Activated T-helper 1 cell treated with anti-CD3 and anti-CD28 coated beads, Interleukin-12 subunit alpha, Interleukin-12 subunit beta, Interleukin-2, Interleukin-4 antibody, amounts not matched to agents 30 ng/mL and 10 ng/mL and 1 ng/mL, durations not matched to agents 14 hours and 24 hours and 36 hours (primary cell): ENCODE measurements at regions of chr5 and their contacts with region 1.

Region 1: GRCh38 chr5:10452768-10453331 is 11.2 kb downstream of the ROPN1L start:
- DNase-seq: peak; percentile 24
- H3K4me3 Mint-ChIP-seq: no peak overlapping the region
- H3K27ac Mint-ChIP-seq: no peak overlapping the region
- H3K4me1 Mint-ChIP-seq: no peaks in the 10 kb centered on the region
- H3K27me3 Mint-ChIP-seq: peaks cover 2% of the 10 kb centered on the region

Region 2: DNA sequence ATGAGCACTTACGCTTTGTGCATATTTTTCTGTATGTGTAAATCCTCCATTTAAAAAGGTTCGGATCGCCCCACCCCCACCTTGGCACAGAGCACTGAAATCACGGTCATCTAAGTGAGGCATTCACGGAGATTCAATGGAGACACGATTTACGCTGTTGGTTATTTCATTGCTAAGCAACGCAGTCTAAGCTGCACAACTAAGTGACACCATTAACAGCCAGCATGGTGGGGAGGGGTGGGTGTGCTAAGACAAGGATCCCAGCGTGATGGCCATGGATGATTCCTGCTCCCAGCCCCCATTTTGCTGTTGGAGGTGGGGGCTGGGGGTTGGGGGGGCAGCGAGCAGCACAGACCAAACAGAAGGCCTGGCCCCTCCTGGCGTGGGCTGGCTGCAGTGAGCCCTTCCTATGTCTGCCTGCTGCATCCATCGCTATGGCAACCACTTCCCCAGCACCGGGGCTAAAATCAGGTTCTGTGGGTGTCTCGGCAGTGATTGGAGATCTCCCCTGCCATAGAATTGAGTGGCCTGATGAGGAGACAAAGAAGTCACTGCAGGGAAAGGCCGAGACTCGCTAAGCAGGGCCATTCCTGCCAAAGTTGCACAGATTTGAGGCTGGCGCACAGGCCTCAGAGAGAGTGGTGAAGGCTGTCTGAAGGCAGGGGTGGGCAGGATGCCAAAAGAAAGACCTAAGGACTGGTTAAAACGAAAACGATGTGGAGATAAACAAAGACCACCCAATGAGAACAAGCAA is 113.6 kb before region 1 on chr5:
- intact Hi-C with region 1: no loop called
- DNase-seq: no peak
- H3K4me3 Mint-ChIP-seq: no peak overlapping the region
- H3K27ac Mint-ChIP-seq: no peak overlapping the region
- H3K4me1 Mint-ChIP-seq: no peaks in the 10 kb centered on the region
- H3K27me3 Mint-ChIP-seq: peaks cover 20% of the 10 kb centered on the region

Region 3: DNA sequence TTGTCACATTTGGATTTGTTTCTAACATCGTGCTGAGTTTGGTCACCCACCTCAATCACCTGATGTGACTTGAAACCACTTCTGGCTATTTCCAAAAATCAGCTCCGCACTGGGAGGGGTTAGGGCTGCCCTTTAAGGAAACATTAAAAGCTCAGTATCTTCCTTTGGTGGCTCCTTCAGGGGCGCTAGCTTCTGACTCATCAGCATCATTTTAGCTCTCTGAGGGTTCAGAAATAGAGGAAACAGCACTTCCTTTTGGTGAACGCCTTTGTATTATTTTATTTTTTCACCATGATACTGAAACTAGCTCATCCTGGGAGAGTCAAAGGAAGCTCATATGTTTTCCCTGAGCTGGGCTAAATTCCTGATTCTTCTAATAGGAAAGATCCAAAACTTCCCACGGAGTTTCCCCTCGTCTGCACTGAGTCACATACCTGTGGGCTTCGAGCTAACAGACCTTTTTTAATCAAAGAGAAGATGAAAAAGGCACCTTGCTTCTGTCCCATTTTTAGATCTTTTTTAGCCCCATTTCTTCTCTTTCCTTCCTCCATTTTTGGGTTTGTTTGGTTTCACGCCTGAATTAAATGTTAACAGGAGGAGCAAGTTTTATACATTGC is 37.1 kb after region 1 on chr5:
- intact Hi-C with region 1: no loop called
- DNase-seq: peak; percentile 1
- H3K4me3 Mint-ChIP-seq: no peak overlapping the region
- H3K27ac Mint-ChIP-seq: no peak overlapping the region
- H3K4me1 Mint-ChIP-seq: peaks cover 25% of the 10 kb centered on the region
- H3K27me3 Mint-ChIP-seq: peaks cover 16% of the 10 kb centered on the region

Region 4: GRCh38 chr5:10536931-10537579 is 84.2 kb after region 1 on chr5:
- intact Hi-C with region 1: no loop called
- DNase-seq: no peak
- H3K4me3 Mint-ChIP-seq: no peak overlapping the region
- H3K27ac Mint-ChIP-seq: no peak overlapping the region
- H3K4me1 Mint-ChIP-seq: peaks cover 16% of the 10 kb centered on the region
- H3K27me3 Mint-ChIP-seq: peaks cover 14% of the 10 kb centered on the region

Region 5: DNA sequence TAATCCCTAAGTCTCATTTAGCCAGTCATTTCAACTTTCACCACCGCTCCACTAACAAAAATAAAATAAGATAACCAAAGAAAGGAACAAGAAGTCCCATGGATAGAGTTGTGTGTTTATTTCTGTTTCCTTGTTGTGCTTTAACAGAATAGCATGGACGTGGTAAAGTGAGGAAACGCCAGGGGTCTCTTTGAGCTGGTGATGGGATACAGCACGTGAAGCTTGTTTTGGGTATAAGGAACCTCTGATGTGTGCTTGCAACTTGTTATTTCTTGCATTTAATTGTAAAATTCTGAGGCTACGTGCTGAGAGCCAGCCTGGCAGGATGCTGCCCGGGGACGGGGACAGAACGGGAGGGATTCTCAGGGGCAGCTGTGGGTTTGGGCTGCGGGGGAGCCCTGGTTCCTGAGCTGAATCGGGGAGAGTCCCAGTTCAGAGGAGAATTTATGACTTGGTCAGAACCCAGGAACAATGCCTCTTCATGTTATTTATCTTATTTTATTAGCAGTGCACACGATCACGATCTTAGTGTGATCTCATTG is 174.4 kb after region 1 on chr5:
- intact Hi-C with region 1: loop called (anchors 1 kb)
- DNase-seq: no peak
- H3K4me3 Mint-ChIP-seq: peak overlapping the region; percentile 77
- H3K27ac Mint-ChIP-seq: peak overlapping the region; percentile 90
- H3K4me1 Mint-ChIP-seq: peaks cover 50% of the 10 kb centered on the region
- H3K27me3 Mint-ChIP-seq: peaks cover 3% of the 10 kb centered on the region

Region 6: DNA sequence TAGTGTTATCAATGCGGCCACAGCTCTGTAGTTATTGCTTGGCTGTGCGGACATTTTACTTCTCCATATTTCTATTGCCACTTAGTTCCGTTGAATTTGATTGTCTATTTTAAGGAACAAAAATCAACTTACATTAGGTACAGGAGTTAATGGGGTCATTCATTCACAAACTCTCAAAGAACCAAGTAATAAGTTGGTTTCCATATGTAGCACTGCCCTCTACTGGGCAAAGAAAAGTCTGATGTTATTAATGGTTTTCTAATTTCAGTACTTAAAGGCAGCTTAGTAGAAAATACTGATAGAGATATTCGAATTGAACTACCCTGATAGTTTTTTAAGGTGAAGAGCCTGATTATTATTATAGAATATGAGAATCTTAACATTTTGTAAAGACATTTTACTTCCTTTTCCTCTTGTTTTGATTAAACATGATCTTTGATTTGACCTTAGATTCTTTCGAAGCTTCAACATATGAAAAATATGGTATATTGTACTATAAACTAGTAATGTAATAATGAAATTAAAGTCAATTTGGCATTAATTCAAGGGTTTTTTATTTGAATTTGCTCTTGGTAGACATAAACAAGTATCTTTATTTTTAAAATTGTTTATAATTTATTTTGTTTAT is 1570.9 kb after region 1 on chr5:
- intact Hi-C with region 1: loop called (anchors 5 kb)
- DNase-seq: no peak
- H3K4me3 Mint-ChIP-seq: no peak overlapping the region
- H3K27ac Mint-ChIP-seq: no peak overlapping the region
- H3K4me1 Mint-ChIP-seq: no peaks in the 10 kb centered on the region
- H3K27me3 Mint-ChIP-seq: no peaks in the 10 kb centered on the region